Body of pancreas (tissue), 4 donors: ENCODE measurements at regions of chr9 and their contacts with region 1.

Region 1: DNA sequence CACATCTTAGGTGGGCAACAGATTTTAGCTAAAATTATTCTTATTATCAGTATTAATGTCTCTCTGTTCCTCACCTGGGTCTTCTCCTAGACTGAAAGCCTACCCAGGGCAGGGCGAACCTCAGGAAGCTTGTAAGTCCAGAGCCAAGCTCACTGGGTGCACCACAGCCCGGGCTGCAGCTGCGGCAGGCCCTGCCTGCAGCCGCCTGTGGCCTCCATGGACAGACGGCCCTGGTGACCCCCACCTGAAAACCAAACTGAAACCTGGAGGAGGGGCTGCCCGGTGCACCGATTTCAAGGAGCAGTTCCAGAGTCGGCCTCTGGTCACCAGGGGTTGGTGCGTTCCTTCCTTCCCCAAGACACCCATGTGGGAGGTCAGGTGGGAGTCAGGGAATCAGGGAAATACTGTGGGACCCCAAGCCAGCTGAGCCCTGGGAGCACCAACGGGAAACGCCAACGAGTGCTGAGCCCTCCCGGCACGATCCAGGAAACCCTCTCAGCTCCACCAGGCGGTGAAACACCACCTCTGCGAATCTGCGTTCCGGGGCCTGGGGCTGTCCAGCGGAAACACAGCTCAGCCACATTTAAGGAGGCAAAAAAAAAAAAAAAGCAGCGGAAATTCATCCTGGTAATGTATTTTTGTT is 68.6 kb upstream of the PPP1R26 start:
- DNase-seq: no peak
- ATAC-seq: no peak
- H3K4me3 ChIP-seq: no peak overlapping the region
- H3K27ac ChIP-seq: no peak overlapping the region
- H3K4me1 ChIP-seq: peaks cover 6% of the 10 kb centered on the region
- H3K27me3 ChIP-seq: peaks cover 0 to 5% of the 10 kb centered on the region in 2 donors
- CTCF ChIP-seq: no peak
- POLR2A ChIP-seq: no peak

Region 2: GRCh38 chr9:134698587-134699342 is 712.2 kb before region 1 on chr9:
- intact Hi-C with region 1: loop called (anchors 10 kb)
- DNase-seq: peak; percentile 61 to 73 (median 72)
- ATAC-seq: peak; percentile 75
- H3K4me3 ChIP-seq: no peak overlapping the region
- H3K27ac ChIP-seq: no peak overlapping the region
- H3K4me1 ChIP-seq: peaks cover 10% of the 10 kb centered on the region
- H3K27me3 ChIP-seq: no peaks in the 10 kb centered on the region
- CTCF ChIP-seq: peak; percentile 79 to 93 (median 86)
- POLR2A ChIP-seq: no peak

Region 3: GRCh38 chr9:134781591-134782294 is 629.2 kb before region 1 on chr9:
- intact Hi-C with region 1: loop called (anchors 10 kb)
- DNase-seq: no peak
- ATAC-seq: no peak
- H3K4me3 ChIP-seq: no peak overlapping the region
- H3K27ac ChIP-seq: no peak overlapping the region
- H3K4me1 ChIP-seq: no peaks in the 10 kb centered on the region
- H3K27me3 ChIP-seq: no peaks in the 10 kb centered on the region
- CTCF ChIP-seq: no peak
- POLR2A ChIP-seq: no peak

Region 4: GRCh38 chr9:135085830-135086546 is 325.0 kb before region 1 on chr9:
- intact Hi-C with region 1: loop called (anchors 5 kb)
- DNase-seq: peak; percentile 89 to 94 (median 90)
- ATAC-seq: peak; percentile 84
- H3K4me3 ChIP-seq: no peak overlapping the region
- H3K27ac ChIP-seq: peak overlapping the region in 3 of 4 donors; percentile 13 to 26 (median 14)
- H3K4me1 ChIP-seq: peaks cover 50% of the 10 kb centered on the region
- H3K27me3 ChIP-seq: peaks cover 0 to 6% of the 10 kb centered on the region in 2 donors
- CTCF ChIP-seq: peak; percentile 91 to 99 (median 98)
- POLR2A ChIP-seq: no peak

Region 5: GRCh38 chr9:135732569-135733274 is 321.8 kb after region 1 on chr9:
- intact Hi-C with region 1: no loop called
- DNase-seq: no peak
- ATAC-seq: no peak
- H3K4me3 ChIP-seq: no peak overlapping the region
- H3K27ac ChIP-seq: no peak overlapping the region
- H3K4me1 ChIP-seq: no peaks in the 10 kb centered on the region
- H3K27me3 ChIP-seq: no peaks in the 10 kb centered on the region
- CTCF ChIP-seq: no peak
- POLR2A ChIP-seq: no peak